Ovary (tissue), 10 donors: ENCODE measurements at regions of chr7 and their contacts with region 1.

Region 1: DNA sequence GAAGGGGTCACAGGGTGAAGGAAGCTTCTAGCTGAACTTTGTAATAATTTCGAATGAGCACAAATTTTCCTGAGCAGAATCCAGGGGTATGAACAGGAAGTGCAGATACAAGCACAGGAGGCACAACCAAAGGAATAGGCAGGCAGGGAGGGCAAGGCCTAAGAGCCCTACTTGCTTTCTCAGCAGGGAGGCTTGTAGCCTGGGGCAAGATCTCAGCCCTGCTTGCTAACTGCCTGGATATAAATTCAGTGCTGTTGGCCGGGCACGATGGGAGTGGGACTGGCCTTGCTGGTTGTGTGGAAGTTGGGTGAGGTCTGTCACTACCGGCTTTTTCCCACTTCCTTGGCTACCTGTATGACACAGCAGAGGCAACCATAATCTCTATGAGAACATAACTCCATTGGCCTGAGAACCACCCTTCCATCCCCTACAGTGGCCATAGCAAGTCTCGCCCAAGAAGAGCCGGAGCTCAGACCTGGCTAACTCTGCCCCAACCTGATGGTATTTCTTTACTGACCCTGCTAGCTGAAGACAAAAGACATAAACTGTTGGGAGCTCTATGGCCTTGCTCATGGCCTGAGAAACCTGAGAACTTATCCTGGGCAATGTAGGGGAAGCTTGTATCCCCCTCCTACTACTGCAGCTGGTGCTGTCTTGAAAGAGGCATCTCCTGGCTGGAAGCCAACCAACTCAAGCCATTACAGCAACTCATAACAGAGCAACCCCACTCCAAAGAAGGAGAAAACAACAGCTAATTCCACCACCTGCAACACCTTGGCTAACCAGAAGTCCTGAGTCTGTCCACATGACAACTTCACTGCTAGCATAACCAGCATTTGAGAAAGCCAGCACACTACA is 27.6 kb downstream of the CLDN12 start:
- DNase-seq: no peak
- H3K4me3 ChIP-seq: no peak overlapping the region
- H3K27ac ChIP-seq: no peak overlapping the region
- H3K4me1 ChIP-seq: no peaks in the 10 kb centered on the region
- H3K27me3 ChIP-seq: no peaks in the 10 kb centered on the region
- CTCF ChIP-seq: no peak
- EP300 ChIP-seq: no peak
- POLR2A ChIP-seq: no peak

Region 2: GRCh38 chr7:90309882-90310281 is 121.0 kb before region 1 on chr7:
- intact Hi-C with region 1: loop called in 1 of 4 experiments (anchors 10 kb)
- DNase-seq: no peak
- H3K4me3 ChIP-seq: no peak overlapping the region
- H3K27ac ChIP-seq: no peak overlapping the region
- H3K4me1 ChIP-seq: no peaks in the 10 kb centered on the region
- H3K27me3 ChIP-seq: no peaks in the 10 kb centered on the region
- CTCF ChIP-seq: no peak
- EP300 ChIP-seq: no peak
- POLR2A ChIP-seq: no peak

Region 3: DNA sequence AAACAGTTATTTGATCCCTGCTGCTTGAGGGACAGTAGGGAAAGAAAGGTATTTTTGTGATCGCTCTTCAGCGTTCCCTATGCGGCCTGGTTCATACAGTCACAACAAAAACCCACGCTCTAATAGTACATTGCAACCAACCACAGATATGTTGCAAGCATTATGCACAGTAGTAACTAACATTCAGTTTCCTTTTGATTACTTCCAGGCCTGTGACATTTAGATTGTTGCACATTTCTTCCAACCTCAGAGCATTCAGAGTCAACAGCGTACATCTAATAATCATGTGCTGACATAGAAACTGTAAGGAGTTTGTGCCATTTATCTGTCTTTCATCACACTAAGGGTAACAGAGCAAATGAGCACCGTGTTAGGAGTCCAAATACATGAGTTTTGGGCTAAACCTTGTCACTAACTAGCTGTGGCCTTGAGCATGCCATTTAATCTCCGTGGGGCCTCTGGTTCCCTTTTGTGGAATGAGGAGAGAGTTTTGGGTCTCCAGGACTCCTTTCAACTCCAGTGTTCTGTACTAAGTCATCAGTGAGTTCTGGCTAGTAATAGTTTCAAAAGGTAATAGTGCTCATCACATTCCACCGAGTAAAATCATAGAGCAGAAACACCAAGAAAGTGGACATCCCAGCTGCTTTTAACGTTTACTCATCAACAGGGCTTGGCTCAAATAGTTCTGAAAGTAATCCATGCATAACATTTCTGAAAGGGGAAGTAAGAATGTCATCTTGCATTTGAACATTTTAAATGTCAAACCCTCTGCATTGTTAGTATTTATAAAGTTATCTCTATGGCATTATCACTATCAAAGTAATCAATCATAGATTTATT is 734.4 kb after region 1 on chr7:
- intact Hi-C with region 1: no loop called
- DNase-seq: no peak
- H3K4me3 ChIP-seq: no peak overlapping the region
- H3K27ac ChIP-seq: no peak overlapping the region
- H3K4me1 ChIP-seq: no peaks in the 10 kb centered on the region
- H3K27me3 ChIP-seq: no peaks in the 10 kb centered on the region
- CTCF ChIP-seq: no peak
- EP300 ChIP-seq: no peak
- POLR2A ChIP-seq: no peak